ENCODE measurements at regions of chr1 and their contacts with region 1.

Region 1: DNA sequence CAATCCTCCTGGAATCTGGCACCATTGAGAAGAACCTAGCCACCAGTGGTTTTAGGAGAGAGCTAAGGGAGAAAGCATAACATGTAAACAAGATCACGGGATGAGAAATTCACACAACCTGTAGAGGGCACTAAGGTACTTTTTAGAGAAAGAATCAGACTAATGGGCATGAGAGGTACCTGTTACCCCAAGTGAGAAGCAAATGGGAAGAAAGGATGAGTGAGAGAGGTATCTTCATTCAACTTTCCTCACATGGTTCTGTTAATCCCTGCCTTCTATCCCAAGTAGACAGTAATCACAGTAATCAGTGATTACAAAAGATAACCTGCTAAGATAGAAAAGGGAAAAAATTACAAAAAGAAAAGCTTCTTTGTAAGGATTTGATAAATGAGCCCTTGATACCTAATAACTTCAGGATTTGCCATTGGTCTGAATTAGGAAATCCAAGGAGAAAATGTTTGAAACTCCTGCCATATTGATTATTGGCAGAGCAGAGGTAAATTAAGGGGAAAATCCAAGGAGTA is 251.1 kb upstream of the ADGRL2 start:
- DNase-seq: peak; percentile 55
- H3K4me3 ChIP-seq: no peak overlapping the region
- H3K27ac ChIP-seq: no peak overlapping the region
- H3K4me1 ChIP-seq: peaks cover 5% of the 10 kb centered on the region
- H3K27me3 ChIP-seq: no peaks in the 10 kb centered on the region
- CTCF ChIP-seq: peak; percentile 58

Region 2: DNA sequence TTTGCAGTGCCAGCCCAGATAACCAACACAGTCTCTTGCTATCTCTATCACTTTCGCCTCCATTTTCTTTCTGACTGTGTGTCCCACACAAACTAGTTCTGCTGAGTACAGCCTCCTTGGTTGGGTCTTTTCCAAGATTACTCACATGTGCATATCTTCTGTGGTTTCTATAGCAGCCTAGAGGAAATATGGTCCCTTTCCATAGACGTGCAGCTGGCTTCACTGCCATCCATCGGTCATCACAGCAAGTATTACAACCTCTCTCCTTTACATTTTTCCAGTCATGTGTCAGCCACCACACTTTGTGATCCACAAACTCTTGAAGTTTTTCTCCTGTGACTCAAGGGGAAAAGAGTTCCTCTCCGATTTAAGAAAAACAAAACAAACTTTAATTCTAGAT is 1649.8 kb before region 1 on chr1:
- CTCF ChIA-PET with region 1: no interaction called
- POLR2A ChIA-PET with region 1: no interaction called
- intact Hi-C with region 1: no loop called
- DNase-seq: no peak
- H3K4me3 ChIP-seq: no peak overlapping the region
- H3K27ac ChIP-seq: no peak overlapping the region
- H3K4me1 ChIP-seq: no peaks in the 10 kb centered on the region
- H3K27me3 ChIP-seq: no peaks in the 10 kb centered on the region
- CTCF ChIP-seq: no peak

Region 3: GRCh38 chr1:81305997-81306452 is 243.6 kb before region 1 on chr1:
- CTCF ChIA-PET with region 1: no interaction called
- POLR2A ChIA-PET with region 1: no interaction called
- intact Hi-C with region 1: loop called (anchors 10 kb)
- DNase-seq: peak; percentile 75
- H3K4me3 ChIP-seq: peak overlapping the region; percentile 45
- H3K27ac ChIP-seq: no peak overlapping the region
- H3K4me1 ChIP-seq: no peaks in the 10 kb centered on the region
- H3K27me3 ChIP-seq: no peaks in the 10 kb centered on the region
- CTCF ChIP-seq: peak; percentile 69